ENCODE measurements at regions of chr1 and their contacts with region 1.

Region 1: GRCh38 chr1:226432586-226433340 is 24.9 kb upstream of the PARP1 start:
- DNase-seq: no peak
- H3K4me3 ChIP-seq: no peak overlapping the region
- H3K27ac ChIP-seq: no peak overlapping the region
- H3K4me1 ChIP-seq: peaks cover 4% of the 10 kb centered on the region
- H3K27me3 ChIP-seq: no peaks in the 10 kb centered on the region
- CTCF ChIP-seq: no peak
- EP300 ChIP-seq: no peak
- POLR2A ChIP-seq: no peak

Region 2: GRCh38 chr1:226476648-226477319 is 44.0 kb after region 1 on chr1:
- intact Hi-C with region 1: no loop called
- DNase-seq: no peak
- H3K4me3 ChIP-seq: no peak overlapping the region
- H3K27ac ChIP-seq: no peak overlapping the region
- H3K4me1 ChIP-seq: no peaks in the 10 kb centered on the region
- H3K27me3 ChIP-seq: no peaks in the 10 kb centered on the region
- CTCF ChIP-seq: no peak
- EP300 ChIP-seq: no peak
- POLR2A ChIP-seq: no peak

Region 3: DNA sequence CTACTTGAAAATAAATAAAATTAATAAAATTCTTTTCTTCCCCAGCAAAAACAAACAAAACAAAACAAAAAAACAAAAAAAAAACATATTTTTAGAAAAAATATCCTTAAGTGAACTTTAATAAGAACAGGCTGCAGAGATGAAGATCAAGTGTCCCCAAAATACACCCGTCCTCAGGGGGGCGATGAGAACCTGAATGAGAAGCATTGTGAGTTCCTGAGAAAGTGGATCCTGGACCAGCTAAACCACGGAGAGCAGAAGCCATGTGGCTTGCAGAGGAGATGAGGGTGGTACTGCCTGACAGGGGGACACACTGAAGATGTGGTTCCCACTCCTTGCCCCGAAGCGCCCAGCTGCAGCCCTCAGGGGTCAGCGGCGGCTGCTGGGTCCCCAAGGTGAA is 217.0 kb after region 1 on chr1:
- intact Hi-C with region 1: no loop called
- DNase-seq: no peak
- H3K4me3 ChIP-seq: no peak overlapping the region
- H3K27ac ChIP-seq: no peak overlapping the region
- H3K4me1 ChIP-seq: peaks cover 4% of the 10 kb centered on the region
- H3K27me3 ChIP-seq: no peaks in the 10 kb centered on the region
- CTCF ChIP-seq: no peak
- EP300 ChIP-seq: no peak
- POLR2A ChIP-seq: no peak

Region 4: DNA sequence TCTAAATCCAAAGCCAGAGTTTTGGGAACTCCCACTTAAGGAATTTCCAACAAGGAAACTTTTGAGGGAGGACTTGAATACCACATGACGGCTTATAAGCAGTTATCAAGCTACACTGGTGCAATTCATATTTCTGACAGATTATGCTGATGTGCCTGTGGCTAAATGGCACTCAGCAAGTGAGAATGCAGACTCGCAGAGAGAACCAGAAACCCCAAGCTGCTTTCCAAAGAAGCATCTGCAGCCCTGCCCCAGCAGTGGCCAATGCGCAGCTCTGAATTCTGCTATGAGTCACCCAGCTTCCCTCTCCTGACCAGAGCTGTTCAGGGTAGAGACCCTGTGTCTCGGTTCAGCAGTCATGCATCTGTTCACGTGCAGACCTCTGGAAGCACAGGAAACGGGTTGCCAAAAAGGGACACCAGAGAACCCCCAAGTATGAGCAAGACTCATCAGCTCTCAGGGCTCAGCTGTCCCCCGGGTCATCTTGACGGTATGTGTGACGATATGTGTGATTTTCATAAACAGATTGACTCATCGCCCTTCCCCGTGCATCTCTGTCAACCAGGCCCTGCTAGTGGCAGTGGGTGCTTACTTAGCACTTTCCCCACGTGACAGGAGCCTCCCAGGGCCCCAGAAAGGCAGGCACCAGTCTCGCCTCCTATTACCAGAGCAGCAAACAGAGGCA is 230.0 kb after region 1 on chr1:
- intact Hi-C with region 1: no loop called
- DNase-seq: peak in 4 of 5 donors; percentile 57 to 77 (median 60)
- H3K4me3 ChIP-seq: no peak overlapping the region
- H3K27ac ChIP-seq: peak overlapping the region; percentile 79 to 87
- H3K4me1 ChIP-seq: peaks cover 38% of the 10 kb centered on the region
- H3K27me3 ChIP-seq: no peaks in the 10 kb centered on the region
- CTCF ChIP-seq: no peak
- EP300 ChIP-seq: peak; percentile 82
- POLR2A ChIP-seq: no peak

Region 5: GRCh38 chr1:226827968-226828513 is 395.3 kb after region 1 on chr1:
- intact Hi-C with region 1: loop called in 1 of 4 experiments (anchors 5 kb)
- DNase-seq: peak; percentile 95 to 98 (median 97)
- H3K4me3 ChIP-seq: no peak overlapping the region
- H3K27ac ChIP-seq: peak overlapping the region; percentile 15 to 69
- H3K4me1 ChIP-seq: no peaks in the 10 kb centered on the region
- H3K27me3 ChIP-seq: no peaks in the 10 kb centered on the region
- CTCF ChIP-seq: peak; percentile 78 to 93 (median 88)
- EP300 ChIP-seq: no peak
- POLR2A ChIP-seq: no peak